B cell (primary cell): ENCODE measurements at regions of chr1 and their contacts with region 1.

Region 1: GRCh38 chr1:36149237-36149972 is at the start of gene TRAPPC3:
- DNase-seq: peak; percentile 99
- ATAC-seq: peak; percentile 93
- H3K4me3 ChIP-seq: peak within 1 kb of the TSS; percentile 74 to 84 (median 83)
- H3K4me3 Mint-ChIP-seq: peak within 1 kb of the TSS; percentile 99
- H3K27ac ChIP-seq: peak within 1 kb of the TSS; percentile 77 to 94
- H3K27ac Mint-ChIP-seq: peak within 1 kb of the TSS; percentile 98
- H3K4me1 ChIP-seq: peaks cover 32 to 41% of the 10 kb centered on the region in 2 donors
- H3K4me1 Mint-ChIP-seq: peaks cover 63% of the 10 kb centered on the region
- H3K27me3 ChIP-seq: no peaks in the 10 kb centered on the region
- H3K27me3 Mint-ChIP-seq: no peaks in the 10 kb centered on the region
- CTCF ChIP-seq: peak; percentile 89
- total RNA-seq, gene TRAPPC3: 42.1 and 45.2 TPM in 2 replicates

Region 2: GRCh38 chr1:36160949-36161485 is 11.6 kb after region 1 on chr1:
- CTCF ChIA-PET with region 1: interaction called, 63 read pairs
- POLR2A ChIA-PET with region 1: interaction called, 18 read pairs
- intact Hi-C with region 1: loop called (anchors 1 kb)
- DNase-seq: peak; percentile 60
- ATAC-seq: peak; percentile 4
- H3K4me3 ChIP-seq: peak overlapping the region; percentile 12 to 51 (median 38)
- H3K4me3 Mint-ChIP-seq: peak overlapping the region; percentile 81
- H3K27ac ChIP-seq: peak overlapping the region; percentile 78 to 88
- H3K27ac Mint-ChIP-seq: peak overlapping the region; percentile 94
- H3K4me1 ChIP-seq: peaks cover 55 to 67% of the 10 kb centered on the region in 2 donors
- H3K4me1 Mint-ChIP-seq: peaks cover 68% of the 10 kb centered on the region
- H3K27me3 ChIP-seq: no peaks in the 10 kb centered on the region
- H3K27me3 Mint-ChIP-seq: no peaks in the 10 kb centered on the region
- CTCF ChIP-seq: no peak

Region 3: DNA sequence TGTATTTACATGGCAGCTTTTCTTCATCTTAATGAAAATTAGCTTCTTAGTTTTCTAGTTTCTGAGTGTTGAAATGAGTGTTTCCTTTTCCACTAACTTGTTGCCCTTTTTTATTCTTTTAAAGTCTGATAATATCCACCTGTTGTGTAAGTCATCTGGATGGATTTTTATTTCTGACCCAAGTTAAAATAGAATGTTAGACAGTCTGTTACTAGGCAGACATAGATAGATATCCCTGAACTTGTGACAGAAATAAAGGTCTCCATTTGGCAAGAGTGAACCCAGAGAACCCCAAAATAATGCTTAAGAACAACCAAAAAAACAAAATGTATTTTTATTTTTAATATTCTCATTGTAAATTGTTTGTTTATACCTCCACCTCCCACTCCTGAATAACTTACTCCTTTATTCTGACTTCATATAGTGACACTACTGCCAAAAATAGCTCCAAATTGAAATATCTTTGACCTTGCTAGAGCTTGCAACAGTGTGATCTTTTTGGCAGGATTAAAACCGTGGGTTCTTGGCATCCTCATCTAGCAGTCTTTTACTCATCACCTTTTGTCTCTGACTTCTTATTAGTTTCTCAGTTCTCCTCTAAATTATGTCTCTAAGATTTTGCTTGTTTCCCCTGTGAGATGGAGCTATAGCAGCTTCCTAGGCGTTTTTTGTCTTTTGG is 129.8 kb after region 1 on chr1:
- CTCF ChIA-PET with region 1: interaction called, 19 read pairs
- POLR2A ChIA-PET with region 1: no interaction called
- intact Hi-C with region 1: no loop called
- DNase-seq: no peak
- ATAC-seq: no peak
- H3K4me3 ChIP-seq: no peak overlapping the region
- H3K4me3 Mint-ChIP-seq: no peak overlapping the region
- H3K27ac ChIP-seq: peak overlapping the region in 1 of 2 donors; percentile 48
- H3K27ac Mint-ChIP-seq: peak overlapping the region; percentile 27
- H3K4me1 ChIP-seq: no peaks in the 10 kb centered on the region
- H3K4me1 Mint-ChIP-seq: peaks cover 9% of the 10 kb centered on the region
- H3K27me3 ChIP-seq: no peaks in the 10 kb centered on the region
- H3K27me3 Mint-ChIP-seq: no peaks in the 10 kb centered on the region
- CTCF ChIP-seq: no peak

Region 4: GRCh38 chr1:36306902-36307456 is 157.6 kb after region 1 on chr1:
- CTCF ChIA-PET with region 1: no interaction called
- POLR2A ChIA-PET with region 1: no interaction called
- intact Hi-C with region 1: loop called (anchors 1 kb)
- DNase-seq: peak; percentile 96
- ATAC-seq: peak; percentile 98
- H3K4me3 ChIP-seq: peak overlapping the region; percentile 9 to 78 (median 68)
- H3K4me3 Mint-ChIP-seq: peak overlapping the region; percentile 97
- H3K27ac ChIP-seq: peak overlapping the region in 1 of 2 donors; percentile 63
- H3K27ac Mint-ChIP-seq: peak overlapping the region; percentile 93
- H3K4me1 ChIP-seq: peaks cover 10 to 33% of the 10 kb centered on the region in 2 donors
- H3K4me1 Mint-ChIP-seq: peaks cover 29% of the 10 kb centered on the region
- H3K27me3 ChIP-seq: no peaks in the 10 kb centered on the region
- H3K27me3 Mint-ChIP-seq: no peaks in the 10 kb centered on the region
- CTCF ChIP-seq: no peak

Region 5: DNA sequence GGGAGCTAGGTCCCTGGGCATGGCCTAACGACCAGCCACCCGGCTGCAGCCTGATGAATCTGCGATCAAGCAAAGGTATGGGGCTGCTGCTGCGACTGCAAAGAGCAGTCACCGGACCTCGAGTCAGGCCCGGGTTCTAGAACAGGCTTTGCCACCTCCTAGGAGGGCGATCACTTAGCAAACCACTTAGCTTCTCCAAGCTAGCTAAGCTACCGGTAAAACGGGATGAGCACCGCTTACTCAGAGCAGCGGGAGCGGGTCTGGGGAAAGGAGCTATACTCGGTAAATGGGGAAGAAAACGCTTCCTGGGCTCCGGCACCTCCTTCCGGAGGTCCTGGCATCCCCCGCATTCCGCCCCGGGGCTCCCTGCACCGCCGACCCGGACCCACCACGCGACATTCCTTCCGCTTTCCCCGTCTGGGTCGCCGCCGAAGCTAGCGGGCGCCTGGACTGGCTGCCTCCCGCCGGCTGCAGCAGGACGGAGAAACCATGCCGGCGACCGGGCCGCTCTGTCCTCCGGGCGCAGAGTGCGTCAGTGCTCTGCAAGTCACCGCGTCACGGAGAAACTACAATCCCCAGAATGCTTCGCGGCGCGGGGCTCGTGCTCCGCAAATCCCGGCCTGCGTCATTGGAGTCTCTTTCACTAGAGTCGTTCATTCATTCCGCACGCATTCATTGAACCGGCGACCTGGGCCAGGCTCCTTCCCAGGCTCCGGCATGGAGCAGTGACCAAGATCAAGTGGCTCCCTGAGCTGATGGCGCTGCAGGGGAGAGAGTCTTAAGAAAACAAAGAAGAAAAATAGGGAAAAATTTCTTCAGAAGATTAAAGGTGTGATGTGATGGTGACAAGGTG is 248.2 kb after region 1 on chr1 and contains the start of gene LSM10:
- CTCF ChIA-PET with region 1: interaction called, 3 read pairs
- POLR2A ChIA-PET with region 1: no interaction called
- intact Hi-C with region 1: loop called (anchors 1 kb)
- DNase-seq: peak; percentile 93
- ATAC-seq: peak; percentile 88
- H3K4me3 ChIP-seq: peak within 1 kb of the TSS; percentile 76 to 99 (median 97)
- H3K4me3 Mint-ChIP-seq: peak within 1 kb of the TSS; percentile 92
- H3K27ac ChIP-seq: peak within 1 kb of the TSS; percentile 78 to 93
- H3K27ac Mint-ChIP-seq: peak within 1 kb of the TSS; percentile 94
- H3K4me1 ChIP-seq: peaks cover 20 to 47% of the 10 kb centered on the region in 2 donors
- H3K4me1 Mint-ChIP-seq: peaks cover 55% of the 10 kb centered on the region
- H3K27me3 ChIP-seq: no peaks in the 10 kb centered on the region
- H3K27me3 Mint-ChIP-seq: no peaks in the 10 kb centered on the region
- CTCF ChIP-seq: no peak
- total RNA-seq, gene LSM10: 70.6 and 73.5 TPM in 2 replicates